CD8-positive, alpha-beta T cell (primary cell): ENCODE measurements at regions of chr2 and their contacts with region 1.

Region 1: DNA sequence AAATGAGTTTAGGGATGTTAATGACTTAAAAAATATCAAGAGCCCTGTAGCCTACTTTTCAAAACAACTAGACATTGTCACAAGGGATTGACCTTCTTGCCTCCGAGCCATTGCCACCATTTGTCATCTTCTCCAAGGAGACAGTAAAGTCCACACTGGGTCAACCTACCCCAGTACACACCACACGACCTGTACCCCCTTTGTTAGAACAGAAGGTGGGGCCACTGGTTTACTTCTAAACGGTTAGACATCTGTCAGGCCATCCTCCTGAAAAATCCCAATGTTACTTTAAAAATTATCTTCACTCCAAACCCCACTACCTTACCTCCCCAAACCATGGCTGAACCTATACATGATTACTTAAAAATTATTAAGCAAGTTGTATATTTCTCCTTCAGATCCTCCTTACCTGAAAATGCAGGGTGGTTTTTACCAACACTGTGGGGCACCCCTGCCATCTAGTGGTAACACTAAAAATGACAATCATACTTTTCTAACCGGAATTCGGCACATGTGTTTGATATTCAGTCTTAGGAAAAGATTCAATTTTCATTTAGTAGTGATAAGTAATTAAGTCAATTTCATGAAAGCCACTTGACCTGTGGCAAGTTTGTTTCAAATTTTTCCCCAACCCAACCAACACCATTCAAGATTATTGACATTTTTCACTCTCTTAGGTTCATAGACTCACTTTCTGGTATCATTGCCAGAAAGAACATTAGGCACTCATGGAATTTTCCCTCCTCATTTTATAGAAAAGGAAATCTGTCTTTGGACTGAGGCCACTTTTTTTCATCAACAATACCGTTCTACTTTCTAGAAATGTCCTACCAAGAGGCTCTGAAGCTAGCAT is 265.3 kb upstream of the PKDCC start:
- DNase-seq: peak in 5 of 9 experiments; percentile 13 to 55 (median 45)
- ATAC-seq: no peak
- H3K4me3 ChIP-seq: no peak overlapping the region
- H3K4me3 Mint-ChIP-seq: no peak overlapping the region
- H3K27ac ChIP-seq: no peak overlapping the region
- H3K27ac Mint-ChIP-seq: no peak overlapping the region
- H3K4me1 ChIP-seq: no peaks in the 10 kb centered on the region
- H3K4me1 Mint-ChIP-seq: no peaks in the 10 kb centered on the region
- H3K27me3 ChIP-seq: no peaks in the 10 kb centered on the region
- H3K27me3 Mint-ChIP-seq: peaks cover 8% of the 10 kb centered on the region
- CTCF ChIP-seq: peak; percentile 84

Region 2: DNA sequence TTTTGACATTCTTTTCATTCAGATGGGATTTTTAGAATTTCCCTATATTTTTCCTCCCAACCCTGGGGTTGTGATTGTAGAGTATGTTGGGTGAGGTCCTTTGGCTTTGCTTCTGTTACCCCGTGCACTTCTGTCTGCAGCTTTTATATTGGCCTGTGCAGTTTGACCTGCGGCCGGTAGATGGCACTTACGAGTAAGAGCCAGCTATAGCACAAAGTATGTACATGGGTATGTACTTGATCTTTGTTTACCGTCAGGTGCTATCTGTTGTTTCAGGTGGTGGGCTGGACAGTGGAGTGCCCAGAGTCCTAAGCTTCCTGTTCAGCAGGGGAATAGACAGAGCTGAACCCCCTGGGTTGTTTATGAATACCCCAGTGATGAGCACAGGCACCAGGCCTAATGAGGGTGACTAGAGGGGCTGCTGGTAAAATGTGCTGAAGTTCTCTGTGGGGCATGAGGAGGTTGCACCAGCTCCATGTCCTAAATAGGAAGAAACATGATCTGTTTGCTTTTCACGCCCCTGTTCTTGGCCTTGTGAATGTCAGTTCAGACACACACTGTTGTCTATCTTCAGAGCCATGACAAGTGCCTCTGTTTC is 1944.6 kb before region 1 on chr2:
- CTCF ChIA-PET with region 1: no interaction called
- POLR2A ChIA-PET with region 1: no interaction called
- intact Hi-C with region 1: loop called in 1 of 2 experiments (anchors 5 kb)
- DNase-seq: peak in 2 of 9 experiments; percentile 10 to 21
- ATAC-seq: no peak
- H3K4me3 ChIP-seq: no peak overlapping the region
- H3K4me3 Mint-ChIP-seq: no peak overlapping the region
- H3K27ac ChIP-seq: no peak overlapping the region
- H3K27ac Mint-ChIP-seq: no peak overlapping the region
- H3K4me1 ChIP-seq: no peaks in the 10 kb centered on the region
- H3K4me1 Mint-ChIP-seq: no peaks in the 10 kb centered on the region
- H3K27me3 ChIP-seq: peaks cover 0 to 2% of the 10 kb centered on the region in 2 experiments
- H3K27me3 Mint-ChIP-seq: no peaks in the 10 kb centered on the region
- CTCF ChIP-seq: no peak

Region 3: DNA sequence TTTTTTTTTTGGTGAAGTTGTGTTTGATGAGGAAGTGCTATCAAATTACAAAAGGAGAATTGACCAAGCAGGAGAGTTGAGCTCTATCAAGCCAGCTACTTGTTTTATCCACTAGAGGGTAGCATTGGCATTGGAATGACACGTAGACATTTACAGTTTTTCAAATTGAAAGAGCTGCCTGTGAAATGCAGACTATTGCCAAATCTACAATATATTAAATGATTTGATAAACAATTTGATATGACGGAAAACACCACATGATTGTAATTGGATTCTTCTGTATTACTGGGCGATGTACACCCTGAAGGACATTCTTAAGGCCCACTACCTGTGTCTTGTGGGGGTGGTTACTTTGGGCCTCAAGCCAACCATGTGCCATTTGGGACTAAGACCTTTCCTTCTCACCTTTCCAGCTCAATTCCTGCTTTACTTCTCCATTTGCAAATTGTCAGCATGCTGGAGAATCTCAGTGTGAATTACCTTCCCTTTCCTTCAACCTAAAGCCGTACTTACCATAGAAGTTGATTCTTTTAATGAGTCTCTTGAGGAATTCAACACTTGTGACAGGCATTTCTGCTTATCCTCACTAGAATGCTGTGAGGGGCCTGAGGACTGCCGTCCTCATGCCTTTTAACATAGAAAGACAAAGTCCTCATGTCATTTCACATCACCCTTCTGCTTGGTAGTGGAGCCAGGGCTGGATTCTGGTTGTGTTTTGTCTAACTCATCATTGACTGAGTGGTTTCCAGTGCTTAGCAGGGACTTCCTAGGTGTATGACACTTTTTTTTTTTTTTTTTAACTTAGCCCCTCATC is 1868.7 kb before region 1 on chr2:
- CTCF ChIA-PET with region 1: interaction called, 4 read pairs
- POLR2A ChIA-PET with region 1: no interaction called
- intact Hi-C with region 1: loop called in 1 of 2 experiments (anchors 1 kb)
- DNase-seq: peak in 2 of 9 experiments; percentile 33 to 49
- ATAC-seq: no peak
- H3K4me3 ChIP-seq: no peak overlapping the region
- H3K4me3 Mint-ChIP-seq: no peak overlapping the region
- H3K27ac ChIP-seq: no peak overlapping the region
- H3K27ac Mint-ChIP-seq: no peak overlapping the region
- H3K4me1 ChIP-seq: no peaks in the 10 kb centered on the region
- H3K4me1 Mint-ChIP-seq: no peaks in the 10 kb centered on the region
- H3K27me3 ChIP-seq: no peaks in the 10 kb centered on the region
- H3K27me3 Mint-ChIP-seq: peaks cover 2% of the 10 kb centered on the region
- CTCF ChIP-seq: peak; percentile 64

Region 4: DNA sequence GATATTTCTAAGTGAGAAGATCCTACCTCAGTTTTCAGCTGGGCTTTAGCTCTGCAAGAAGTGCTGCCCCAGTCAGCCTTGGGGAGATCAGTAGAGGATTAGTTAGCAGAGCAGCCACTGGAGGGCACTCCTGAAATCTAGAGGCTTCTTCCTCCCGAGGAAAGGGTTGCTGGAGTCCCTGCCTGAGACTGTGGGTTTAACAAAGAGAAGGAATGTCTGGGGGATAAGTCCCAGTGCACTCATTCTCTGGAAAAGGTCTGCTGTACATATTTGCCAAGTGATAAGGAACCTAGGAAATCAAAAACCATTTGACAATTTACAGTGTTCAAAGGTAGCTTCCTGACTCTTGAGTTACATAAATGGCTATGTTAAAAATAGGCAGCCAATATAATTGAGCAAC is 1537.9 kb before region 1 on chr2:
- CTCF ChIA-PET with region 1: no interaction called
- POLR2A ChIA-PET with region 1: no interaction called
- intact Hi-C with region 1: loop called in 1 of 2 experiments (anchors 5 kb)
- DNase-seq: peak in 1 of 9 experiments; percentile 3
- ATAC-seq: no peak
- H3K4me3 ChIP-seq: no peak overlapping the region
- H3K4me3 Mint-ChIP-seq: no peak overlapping the region
- H3K27ac ChIP-seq: no peak overlapping the region
- H3K27ac Mint-ChIP-seq: no peak overlapping the region
- H3K4me1 ChIP-seq: no peaks in the 10 kb centered on the region
- H3K4me1 Mint-ChIP-seq: no peaks in the 10 kb centered on the region
- H3K27me3 ChIP-seq: no peaks in the 10 kb centered on the region
- H3K27me3 Mint-ChIP-seq: no peaks in the 10 kb centered on the region
- CTCF ChIP-seq: no peak

Region 5: DNA sequence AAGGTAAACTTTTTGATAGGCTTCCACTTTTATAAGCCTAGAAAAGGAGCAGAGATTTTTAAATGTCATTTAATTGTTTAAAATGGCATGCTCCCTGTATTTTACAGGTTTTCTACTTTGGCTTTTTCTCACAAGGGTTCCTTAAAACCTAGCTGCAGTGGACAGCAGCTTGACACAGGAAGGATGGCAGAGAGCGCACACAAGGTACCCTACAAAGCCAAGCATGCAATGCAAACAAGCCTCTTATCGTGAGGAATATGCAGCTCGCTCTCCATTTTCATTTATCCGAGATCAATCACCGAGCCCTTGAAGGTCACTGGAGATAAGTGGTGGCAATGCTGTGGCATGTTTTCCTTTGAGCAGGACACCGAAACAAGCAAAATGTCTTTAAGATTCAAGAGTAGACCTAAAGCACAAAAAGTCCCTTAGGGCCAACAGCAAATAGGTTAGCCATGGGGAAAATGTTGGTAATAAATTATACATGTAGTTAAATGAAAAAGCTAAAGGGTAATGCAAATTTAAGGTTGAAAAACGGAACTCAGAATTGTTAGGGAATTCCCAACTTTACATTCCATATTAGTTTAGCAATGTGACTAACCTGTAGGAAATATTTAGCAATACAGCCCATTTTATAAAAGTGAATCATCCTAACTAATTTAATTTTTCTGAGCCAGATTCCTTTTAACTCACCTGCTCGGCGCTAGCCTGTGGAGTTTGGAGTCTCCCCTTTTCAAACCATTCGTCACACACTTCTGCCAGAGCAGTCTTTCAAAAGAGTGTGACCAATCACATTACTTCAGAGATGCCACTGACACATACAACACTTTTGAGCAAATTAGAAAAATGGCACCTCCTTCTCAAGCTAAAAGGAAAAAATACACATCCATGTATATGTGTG is 72.6 kb before region 1 on chr2:
- CTCF ChIA-PET with region 1: no interaction called
- POLR2A ChIA-PET with region 1: no interaction called
- intact Hi-C with region 1: no loop called
- DNase-seq: no peak
- ATAC-seq: no peak
- H3K4me3 ChIP-seq: no peak overlapping the region
- H3K4me3 Mint-ChIP-seq: no peak overlapping the region
- H3K27ac ChIP-seq: no peak overlapping the region
- H3K27ac Mint-ChIP-seq: no peak overlapping the region
- H3K4me1 ChIP-seq: no peaks in the 10 kb centered on the region
- H3K4me1 Mint-ChIP-seq: no peaks in the 10 kb centered on the region
- H3K27me3 ChIP-seq: no peaks in the 10 kb centered on the region
- H3K27me3 Mint-ChIP-seq: peaks cover 17% of the 10 kb centered on the region
- CTCF ChIP-seq: no peak

Region 6: DNA sequence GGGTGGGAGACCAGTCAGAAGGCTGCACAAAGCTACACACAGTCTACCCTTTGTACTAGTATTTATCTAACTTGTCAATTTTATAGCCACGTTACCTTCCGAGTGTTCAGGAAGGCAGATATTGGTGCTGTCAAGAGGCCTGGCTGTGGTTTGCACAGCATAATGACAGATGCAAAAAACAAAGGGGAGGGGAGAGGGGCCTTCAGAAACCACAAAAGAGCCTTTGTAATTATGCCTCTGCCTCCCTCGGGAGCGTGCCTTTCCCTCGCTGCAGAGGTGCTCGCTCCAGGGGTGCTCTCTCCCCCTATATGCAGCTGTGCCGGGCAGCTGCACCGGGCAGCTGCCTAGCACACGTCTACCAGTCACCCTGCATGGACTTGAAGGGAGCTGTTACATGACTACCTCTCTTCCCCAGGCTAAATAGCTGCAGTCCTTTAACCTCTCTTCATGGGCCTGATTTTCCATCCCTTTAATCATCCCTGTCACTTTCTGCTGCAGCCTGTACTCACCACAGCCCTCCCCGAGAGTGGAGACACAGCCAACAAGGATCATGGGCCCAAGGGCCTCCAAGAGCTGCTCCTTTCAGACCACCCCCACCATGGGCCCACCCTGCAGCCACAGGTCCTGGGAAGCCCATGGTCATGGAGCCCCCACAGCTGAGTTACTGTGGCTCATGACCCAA is 96.8 kb after region 1 on chr2:
- CTCF ChIA-PET with region 1: no interaction called
- POLR2A ChIA-PET with region 1: no interaction called
- intact Hi-C with region 1: no loop called
- DNase-seq: no peak
- ATAC-seq: no peak
- H3K4me3 ChIP-seq: no peak overlapping the region
- H3K4me3 Mint-ChIP-seq: no peak overlapping the region
- H3K27ac ChIP-seq: no peak overlapping the region
- H3K27ac Mint-ChIP-seq: no peak overlapping the region
- H3K4me1 ChIP-seq: no peaks in the 10 kb centered on the region
- H3K4me1 Mint-ChIP-seq: peaks cover 7% of the 10 kb centered on the region
- H3K27me3 ChIP-seq: peaks cover 0 to 2% of the 10 kb centered on the region in 2 experiments
- H3K27me3 Mint-ChIP-seq: peaks cover 4% of the 10 kb centered on the region
- CTCF ChIP-seq: no peak